ENCODE measurements at regions of chr5 and their contacts with region 1.

Region 1: GRCh38 chr5:135437796-135438560 is 9.2 kb downstream of the DCANP1 start:
- DNase-seq: peak in 2 of 4 experiments; percentile 24 to 45
- ATAC-seq: peak; percentile 41; the same call in 2 of the 3 replicates
- H3K4me3 ChIP-seq: no peak overlapping the region
- H3K27ac ChIP-seq: peak overlapping the region; percentile 17; the same call in 2 of the 3 replicates
- H3K4me1 ChIP-seq: peaks cover 36 to 41% of the 10 kb centered on the region in 2 experiments
- H3K27me3 ChIP-seq: no peaks in the 10 kb centered on the region
- CTCF ChIP-seq: peak in 1 of 3 experiments; percentile 12; a peak in 1 of 6 replicates
- EP300 ChIP-seq: no peak
- POLR2A ChIP-seq: no peak
- RAD21 ChIP-seq: no peak

Region 2: GRCh38 chr5:135457424-135458071 is 19.6 kb after region 1 on chr5:
- CTCF ChIA-PET with region 1: no interaction called
- POLR2A ChIA-PET with region 1: interaction called, 4 read pairs
- in situ Hi-C with region 1: no loop called
- intact Hi-C with region 1: loop called (anchors 1 kb)
- DNase-seq: peak; percentile 82 to 93 (median 86)
- ATAC-seq: peak; percentile 90
- H3K4me3 ChIP-seq: no peak overlapping the region
- H3K27ac ChIP-seq: peak overlapping the region; percentile 51; the same call in 2 of the 3 replicates
- H3K4me1 ChIP-seq: peaks cover 26 to 47% of the 10 kb centered on the region in 2 experiments
- H3K27me3 ChIP-seq: no peaks in the 10 kb centered on the region; a peak in 1 of 5 replicates
- CTCF ChIP-seq: peak; percentile 95 to 98 (median 97)
- EP300 ChIP-seq: no peak
- POLR2A ChIP-seq: no peak
- RAD21 ChIP-seq: peak; percentile 71 to 74